Endothelial cell of umbilical vein (primary cell): ENCODE measurements at regions of chr9 and their contacts with region 1.

Region 1: DNA sequence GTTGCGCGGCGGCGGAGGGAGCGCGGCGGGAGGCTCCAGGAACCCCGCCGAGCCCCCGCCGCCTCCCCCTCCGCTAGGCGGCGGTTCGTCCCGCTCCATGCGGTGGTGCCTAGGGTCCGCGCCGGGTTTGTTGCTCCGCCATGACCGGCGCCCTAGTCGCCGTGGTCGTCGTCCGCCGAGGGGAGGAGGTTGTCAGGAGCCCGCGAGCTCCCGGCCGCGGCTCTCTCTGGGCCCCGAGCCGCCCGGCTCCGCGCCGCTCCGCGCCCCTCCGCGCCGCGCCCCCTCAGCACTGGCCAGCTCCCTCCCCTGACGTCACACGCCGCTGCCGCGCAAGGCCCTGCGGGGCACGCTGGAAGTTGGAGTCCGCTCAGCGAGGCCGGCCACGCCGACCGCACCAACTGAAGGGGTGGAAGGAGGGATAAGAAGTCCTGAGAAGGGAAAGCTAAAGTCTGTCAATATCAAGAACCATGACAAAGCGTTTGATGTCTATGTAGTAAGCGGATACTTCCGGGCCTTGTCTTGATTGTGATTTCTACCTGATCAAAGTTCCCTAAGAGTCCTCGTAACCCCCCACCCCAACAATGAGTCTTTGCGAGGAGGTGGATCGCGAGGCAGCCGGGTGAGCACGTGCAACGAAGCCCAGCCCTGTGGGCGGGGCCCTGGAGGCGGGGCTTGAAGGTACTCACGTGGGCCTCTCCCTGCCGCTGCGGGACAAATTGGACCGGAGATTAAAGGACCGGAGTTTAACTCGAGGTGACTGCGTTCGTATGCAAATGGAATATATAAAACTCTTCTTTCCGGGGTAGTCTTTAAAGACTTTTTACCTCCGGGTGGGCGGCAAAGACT is at the start of gene NR6A1:
- DNase-seq: peak; percentile 96
- H3K4me3 ChIP-seq: peak within 1 kb of the TSS; percentile 29 to 62 (median 54)
- H3K27ac ChIP-seq: peak within 1 kb of the TSS; percentile 69
- H3K4me1 ChIP-seq: peaks cover 10% of the 10 kb centered on the region
- H3K27me3 ChIP-seq: peaks cover 36 to 42% of the 10 kb centered on the region in 2 experiments
- CTCF ChIP-seq: peak; percentile 26 to 36
- POLR2A ChIP-seq: no peak
- total RNA-seq, gene NR6A1: 0.32 and 1.2 TPM in 2 replicates

Region 2: GRCh38 chr9:124658165-124659017 is 112.9 kb before region 1 on chr9:
- CTCF ChIA-PET with region 1: no interaction called
- POLR2A ChIA-PET with region 1: no interaction called
- dilution Hi-C with region 1: no loop called
- intact Hi-C with region 1: loop called (anchors 1 kb)
- DNase-seq: peak; percentile 95
- H3K4me3 ChIP-seq: peak overlapping the region; percentile 53 to 100 (median 99)
- H3K27ac ChIP-seq: peak overlapping the region; percentile 98
- H3K4me1 ChIP-seq: peaks cover 33% of the 10 kb centered on the region
- H3K27me3 ChIP-seq: no peaks in the 10 kb centered on the region
- CTCF ChIP-seq: no peak
- POLR2A ChIP-seq: peak; percentile 99

Region 3: DNA sequence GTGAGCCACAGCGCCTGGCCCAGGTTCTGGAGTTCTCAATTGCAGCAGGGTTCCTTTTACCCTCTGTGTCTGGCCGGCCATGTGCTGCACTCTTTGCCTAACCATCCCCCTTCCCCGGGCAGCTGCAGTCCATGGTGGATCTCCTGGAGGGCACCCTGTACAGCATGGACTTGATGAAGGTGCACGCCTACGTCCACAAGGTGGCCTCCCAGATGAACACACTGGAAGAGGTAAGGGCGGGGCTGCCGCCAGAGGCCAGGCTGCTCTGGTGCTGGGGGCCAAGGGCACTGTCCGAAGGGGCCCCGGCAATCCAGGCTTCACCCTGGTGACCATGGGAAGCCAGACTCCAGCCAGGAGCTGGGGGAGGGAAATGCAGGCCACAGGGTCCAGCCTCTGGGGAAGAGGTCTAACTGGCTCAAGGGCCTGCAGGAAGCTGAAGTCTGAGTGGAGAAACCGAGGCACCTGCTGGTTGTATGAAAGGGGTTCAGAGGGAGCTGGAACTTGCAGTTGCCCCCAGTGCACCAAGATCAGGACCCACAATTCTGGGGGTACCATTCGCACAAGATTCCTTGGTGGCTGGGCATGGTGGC is 23.8 kb after region 1 on chr9:
- CTCF ChIA-PET with region 1: interaction called, 16 read pairs
- POLR2A ChIA-PET with region 1: no interaction called
- dilution Hi-C with region 1: no loop called
- intact Hi-C with region 1: no loop called
- DNase-seq: no peak
- H3K4me3 ChIP-seq: no peak overlapping the region
- H3K27ac ChIP-seq: no peak overlapping the region
- H3K4me1 ChIP-seq: peaks cover 11% of the 10 kb centered on the region
- H3K27me3 ChIP-seq: peaks cover 2 to 3% of the 10 kb centered on the region in 2 experiments
- CTCF ChIP-seq: no peak
- POLR2A ChIP-seq: no peak

Region 4: DNA sequence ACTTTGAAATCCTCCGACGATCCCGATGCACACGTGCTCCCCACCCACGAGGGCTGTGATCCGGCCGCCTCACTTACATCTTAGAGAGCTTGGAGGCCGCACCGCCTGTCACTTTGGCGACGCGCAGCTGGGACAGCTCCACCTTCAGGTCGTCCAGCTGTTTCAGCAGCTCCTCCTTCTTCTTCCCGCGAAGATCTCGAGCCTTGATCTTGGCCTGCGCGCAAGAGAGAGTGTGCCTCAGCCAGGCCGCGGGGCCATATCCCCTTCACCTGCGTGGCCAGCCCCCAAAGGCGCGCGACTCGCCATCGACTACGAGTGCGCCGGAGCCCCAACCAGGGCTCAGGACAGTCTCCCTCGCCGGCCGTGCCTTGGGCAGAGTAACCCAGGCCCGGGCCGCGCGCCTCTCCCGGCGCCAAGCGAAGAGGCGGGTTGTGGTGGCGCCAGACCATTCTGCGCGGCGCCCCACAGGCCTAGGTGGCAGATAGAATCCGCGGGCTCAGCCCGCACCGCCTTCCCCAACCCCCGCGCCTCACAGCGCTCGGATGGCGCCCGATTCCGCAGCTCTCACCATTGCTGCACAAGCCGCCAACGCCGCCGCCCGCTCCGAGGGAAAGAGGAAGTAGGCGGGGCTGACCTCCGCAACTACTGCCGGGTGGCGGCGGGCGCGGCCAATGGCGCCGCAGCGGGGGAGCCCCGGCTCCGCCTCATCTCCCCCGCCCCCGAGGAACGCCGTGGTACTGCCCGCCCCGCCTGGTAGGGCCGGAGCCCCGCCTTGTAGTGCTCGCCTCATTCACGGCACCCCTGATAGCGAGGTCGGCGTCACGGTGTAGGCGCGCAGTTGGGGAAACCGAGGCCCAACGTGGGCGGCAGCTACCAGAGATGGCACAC is 90.3 kb after region 1 on chr9 and contains the starts of genes ARPC5L and RPL35:
- CTCF ChIA-PET with region 1: interaction called, 967 read pairs
- POLR2A ChIA-PET with region 1: interaction called, 10 read pairs
- dilution Hi-C with region 1: no loop called
- intact Hi-C with region 1: no loop called
- DNase-seq: peak; percentile 94
- H3K4me3 ChIP-seq: peak within 1 kb of the TSS; percentile 64 to 67 (median 64)
- H3K27ac ChIP-seq: peak within 1 kb of the TSS; percentile 63
- H3K4me1 ChIP-seq: peaks cover 22% of the 10 kb centered on the region
- H3K27me3 ChIP-seq: no peaks in the 10 kb centered on the region
- CTCF ChIP-seq: peak; percentile 15 to 18
- POLR2A ChIP-seq: peak; percentile 96
- total RNA-seq, gene ARPC5L: 67.7 and 68.1 TPM in 2 replicates
- total RNA-seq, gene RPL35: 1,181 and 1,230 TPM in 2 replicates

Region 5: DNA sequence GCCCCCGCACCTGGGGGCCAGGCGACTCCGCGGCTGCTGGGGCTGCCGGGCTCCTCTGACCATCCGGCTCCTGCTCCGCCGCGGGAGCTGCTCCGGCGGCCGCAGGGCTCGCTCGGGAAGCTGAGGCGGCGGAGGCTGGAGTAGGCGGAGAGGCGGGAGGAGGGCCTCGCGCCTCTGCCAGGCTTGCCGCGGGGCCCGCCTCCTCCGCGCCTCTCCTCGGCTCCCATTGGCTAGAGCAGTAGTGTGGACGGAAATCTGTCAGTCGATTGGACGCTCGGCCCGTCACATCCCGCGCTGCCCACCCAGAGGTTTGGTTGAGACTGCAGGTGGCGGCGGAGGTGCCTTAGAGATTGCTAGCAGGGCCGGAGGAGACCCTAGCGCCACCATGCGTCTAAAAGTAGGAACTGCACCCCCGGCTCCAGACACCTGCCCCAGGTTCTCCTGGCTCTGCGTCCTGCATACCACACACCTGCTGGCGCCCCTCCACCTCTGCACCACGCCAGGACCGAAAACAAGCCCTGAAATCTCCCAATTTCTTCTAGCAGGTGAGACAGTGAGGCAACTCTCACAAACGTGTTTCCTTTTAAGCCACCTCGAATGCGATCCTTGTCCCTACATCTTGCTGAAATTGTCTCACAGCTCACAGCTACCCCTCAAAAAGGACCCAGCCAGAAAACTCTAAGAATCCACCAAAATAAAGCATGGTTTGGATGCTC is 372.3 kb after region 1 on chr9 and contains the start of gene SCAI:
- CTCF ChIA-PET with region 1: interaction called, 8 read pairs
- POLR2A ChIA-PET with region 1: no interaction called
- dilution Hi-C with region 1: no loop called
- intact Hi-C with region 1: loop called (anchors 1 kb)
- DNase-seq: peak; percentile 99
- H3K4me3 ChIP-seq: peak within 1 kb of the TSS; percentile 19 to 74 (median 59)
- H3K27ac ChIP-seq: no peak within 1 kb of the TSS
- H3K4me1 ChIP-seq: peaks cover 6% of the 10 kb centered on the region
- H3K27me3 ChIP-seq: no peaks in the 10 kb centered on the region
- CTCF ChIP-seq: peak; percentile 94 to 99
- POLR2A ChIP-seq: peak; percentile 71
- total RNA-seq, gene SCAI: 6.9 and 9.3 TPM in 2 replicates

Region 6: GRCh38 chr9:125374443-125375309 is 603.4 kb after region 1 on chr9:
- CTCF ChIA-PET with region 1: interaction called, 9 read pairs
- POLR2A ChIA-PET with region 1: no interaction called
- dilution Hi-C with region 1: no loop called
- intact Hi-C with region 1: loop called (anchors 1 kb)
- DNase-seq: peak; percentile 66
- H3K4me3 ChIP-seq: no peak overlapping the region
- H3K27ac ChIP-seq: no peak overlapping the region
- H3K4me1 ChIP-seq: no peaks in the 10 kb centered on the region
- H3K27me3 ChIP-seq: peaks cover 0 to 4% of the 10 kb centered on the region in 2 experiments
- CTCF ChIP-seq: peak; percentile 69 to 76
- POLR2A ChIP-seq: no peak